CD8-positive, alpha-beta T cell (primary cell): ENCODE measurements at regions of chr16 and their contacts with region 1.

Region 1: DNA sequence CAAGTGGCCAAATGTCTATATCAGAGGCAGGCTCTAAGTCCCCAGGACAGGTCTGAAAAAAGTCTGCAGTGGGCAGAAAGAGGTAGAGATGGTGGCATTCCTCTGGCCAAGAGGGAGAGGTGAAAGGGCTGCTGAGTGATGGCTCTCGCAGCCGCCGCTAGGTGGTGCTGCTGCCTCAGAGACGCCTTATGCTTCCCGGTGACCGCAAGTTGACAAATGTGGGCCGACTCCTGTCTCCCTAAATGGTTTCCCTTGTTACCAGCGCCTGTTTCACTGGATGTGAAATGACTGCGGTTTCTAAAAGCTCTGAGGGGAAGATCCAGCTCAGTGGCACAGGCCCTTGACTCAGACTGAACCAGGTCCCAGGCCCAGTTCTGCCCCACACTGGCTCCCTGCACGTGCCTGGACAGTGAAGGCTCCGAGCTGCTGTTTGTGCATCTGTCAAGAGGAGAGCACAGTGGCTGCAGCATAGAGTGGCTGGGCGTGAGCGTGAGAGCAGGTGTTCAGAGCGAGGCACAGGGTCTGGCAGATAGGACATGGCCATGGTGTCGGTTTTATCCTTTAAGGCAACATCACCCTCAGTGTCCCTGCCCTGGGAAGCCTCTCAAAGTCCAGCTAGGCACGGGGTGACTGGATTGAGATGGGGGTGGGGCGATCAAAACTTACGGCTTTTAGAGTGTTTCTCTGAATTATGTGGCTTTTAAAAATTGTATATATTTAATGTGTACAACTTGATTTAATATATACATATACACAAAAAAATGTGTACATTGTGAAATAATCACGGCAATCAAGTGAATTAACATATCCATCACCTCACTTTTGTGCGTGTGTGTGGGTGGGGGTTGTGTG is 19.9 kb downstream of the CLEC16A start:
- DNase-seq: peak; percentile 57 to 89 (median 82)
- ATAC-seq: peak; percentile 58
- H3K4me3 ChIP-seq: peak overlapping the region in 1 of 2 experiments; percentile 7
- H3K4me3 Mint-ChIP-seq: peak overlapping the region; percentile 18
- H3K27ac ChIP-seq: no peak overlapping the region
- H3K27ac Mint-ChIP-seq: peak overlapping the region; percentile 49
- H3K4me1 ChIP-seq: peaks cover 4% of the 10 kb centered on the region
- H3K4me1 Mint-ChIP-seq: peaks cover 16% of the 10 kb centered on the region
- H3K27me3 ChIP-seq: no peaks in the 10 kb centered on the region
- H3K27me3 Mint-ChIP-seq: no peaks in the 10 kb centered on the region
- CTCF ChIP-seq: peak; percentile 90

Region 2: DNA sequence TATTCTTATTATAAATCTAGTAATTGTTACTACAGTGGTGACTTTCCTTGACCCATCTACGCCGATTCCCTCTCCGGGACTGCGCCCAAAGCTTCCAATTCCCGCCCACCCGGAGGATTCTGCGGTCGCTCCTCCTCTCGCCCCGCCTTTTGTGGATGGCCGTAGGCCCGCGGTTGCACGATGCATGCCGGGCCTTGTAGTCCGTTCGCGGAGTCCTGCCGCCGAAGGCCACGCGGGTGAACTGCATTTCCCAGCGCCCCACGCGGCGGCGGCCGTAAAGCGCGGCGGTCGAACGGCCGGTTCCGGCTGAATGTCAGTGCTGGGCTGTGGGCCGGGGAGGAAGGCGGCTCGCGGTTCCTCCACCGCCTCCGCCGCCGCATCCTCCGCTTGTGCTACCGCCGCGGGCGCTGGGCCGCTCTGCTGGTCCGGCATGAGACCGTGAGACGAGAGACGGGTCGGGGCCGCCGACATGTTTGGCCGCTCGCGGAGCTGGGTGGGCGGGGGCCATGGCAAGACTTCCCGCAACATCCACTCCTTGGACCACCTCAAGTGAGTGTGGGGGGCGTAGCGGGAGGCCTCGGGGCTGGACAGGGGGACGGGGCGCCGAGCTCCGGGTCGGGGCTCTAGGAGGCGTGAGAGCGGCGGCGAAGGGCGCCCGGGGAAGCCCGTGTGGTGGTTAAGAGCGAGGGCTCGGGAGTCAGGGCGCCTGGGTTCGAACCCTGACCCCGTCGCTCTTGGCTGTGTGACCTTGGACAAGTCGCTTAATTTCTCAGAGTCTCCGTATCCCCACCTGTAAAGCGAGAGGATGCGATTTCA is 19.8 kb before region 1 on chr16 and contains the start of gene CLEC16A:
- CTCF ChIA-PET with region 1: interaction called, 47 read pairs
- POLR2A ChIA-PET with region 1: interaction called, 3 read pairs
- intact Hi-C with region 1: no loop called
- DNase-seq: peak; percentile 91 to 98 (median 93)
- ATAC-seq: peak; percentile 70
- H3K4me3 ChIP-seq: peak within 1 kb of the TSS; percentile 66 to 76
- H3K4me3 Mint-ChIP-seq: peak within 1 kb of the TSS; percentile 93
- H3K27ac ChIP-seq: peak within 1 kb of the TSS; percentile 38 to 65
- H3K27ac Mint-ChIP-seq: peak within 1 kb of the TSS; percentile 82
- H3K4me1 ChIP-seq: peaks cover 60% of the 10 kb centered on the region
- H3K4me1 Mint-ChIP-seq: peaks cover 71% of the 10 kb centered on the region
- H3K27me3 ChIP-seq: no peaks in the 10 kb centered on the region
- H3K27me3 Mint-ChIP-seq: no peaks in the 10 kb centered on the region
- CTCF ChIP-seq: no peak
- total RNA-seq, gene CLEC16A: 20.5 to 21.9 TPM

Region 3: GRCh38 chr16:11273721-11274324 is 309.6 kb after region 1 on chr16:
- CTCF ChIA-PET with region 1: interaction called, 11 read pairs
- POLR2A ChIA-PET with region 1: no interaction called
- intact Hi-C with region 1: no loop called
- DNase-seq: no peak
- ATAC-seq: no peak
- H3K4me3 ChIP-seq: no peak overlapping the region
- H3K4me3 Mint-ChIP-seq: no peak overlapping the region
- H3K27ac ChIP-seq: no peak overlapping the region
- H3K27ac Mint-ChIP-seq: no peak overlapping the region
- H3K4me1 ChIP-seq: no peaks in the 10 kb centered on the region
- H3K4me1 Mint-ChIP-seq: no peaks in the 10 kb centered on the region
- H3K27me3 ChIP-seq: no peaks in the 10 kb centered on the region
- H3K27me3 Mint-ChIP-seq: no peaks in the 10 kb centered on the region
- CTCF ChIP-seq: no peak

Region 4: DNA sequence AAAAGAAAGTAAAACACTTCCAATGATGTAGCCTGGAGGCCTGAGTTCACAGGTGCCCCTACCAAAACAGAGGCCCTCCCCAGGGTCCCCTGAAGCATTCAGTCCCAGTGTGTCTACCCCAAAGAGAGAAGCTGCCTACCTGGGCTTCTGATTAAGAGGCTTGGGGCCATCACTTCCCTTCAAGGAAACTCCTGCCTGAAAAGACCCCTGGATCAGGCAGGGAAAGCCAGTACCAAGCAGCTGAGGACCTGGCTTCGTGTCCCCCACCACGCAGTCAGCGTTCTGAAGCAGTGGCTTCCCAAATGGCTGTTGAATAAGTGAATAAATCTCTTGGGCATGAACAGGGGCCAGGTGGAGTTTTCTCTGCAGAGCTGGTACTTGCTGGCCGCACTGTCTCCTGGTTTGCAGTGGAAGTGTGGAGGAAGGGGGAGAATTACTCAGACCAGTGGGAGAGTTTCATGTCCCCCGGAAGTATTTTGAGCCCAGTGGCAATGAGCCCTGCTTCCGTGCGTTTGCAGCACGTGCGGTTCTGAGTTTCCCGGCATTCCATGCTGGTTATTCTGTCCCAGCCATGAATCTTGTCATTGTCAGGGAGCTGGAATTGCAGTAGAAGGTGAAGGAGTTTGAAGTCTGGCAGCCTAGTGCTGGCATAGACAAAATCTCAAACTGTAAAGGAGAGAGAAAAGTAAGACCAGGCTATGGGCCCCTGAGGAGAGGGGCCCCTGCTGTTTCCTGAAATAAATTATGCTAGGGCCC is 408.0 kb after region 1 on chr16:
- CTCF ChIA-PET with region 1: interaction called, 15 read pairs
- POLR2A ChIA-PET with region 1: no interaction called
- intact Hi-C with region 1: no loop called
- DNase-seq: no peak
- ATAC-seq: no peak
- H3K4me3 ChIP-seq: no peak overlapping the region
- H3K4me3 Mint-ChIP-seq: no peak overlapping the region
- H3K27ac ChIP-seq: no peak overlapping the region
- H3K27ac Mint-ChIP-seq: no peak overlapping the region
- H3K4me1 ChIP-seq: no peaks in the 10 kb centered on the region
- H3K4me1 Mint-ChIP-seq: peaks cover 4% of the 10 kb centered on the region
- H3K27me3 ChIP-seq: no peaks in the 10 kb centered on the region
- H3K27me3 Mint-ChIP-seq: no peaks in the 10 kb centered on the region
- CTCF ChIP-seq: no peak

Region 5: GRCh38 chr16:11396241-11397048 is 432.2 kb after region 1 on chr16:
- CTCF ChIA-PET with region 1: interaction called, 10 read pairs
- POLR2A ChIA-PET with region 1: no interaction called
- intact Hi-C with region 1: no loop called
- DNase-seq: peak; percentile 46 to 78 (median 65)
- ATAC-seq: peak; percentile 85
- H3K4me3 ChIP-seq: no peak overlapping the region
- H3K4me3 Mint-ChIP-seq: no peak overlapping the region
- H3K27ac ChIP-seq: no peak overlapping the region
- H3K27ac Mint-ChIP-seq: no peak overlapping the region
- H3K4me1 ChIP-seq: no peaks in the 10 kb centered on the region
- H3K4me1 Mint-ChIP-seq: no peaks in the 10 kb centered on the region
- H3K27me3 ChIP-seq: no peaks in the 10 kb centered on the region
- H3K27me3 Mint-ChIP-seq: no peaks in the 10 kb centered on the region
- CTCF ChIP-seq: peak; percentile 99

Region 6: GRCh38 chr16:11715246-11715947 is 751.1 kb after region 1 on chr16:
- CTCF ChIA-PET with region 1: interaction called, 19 read pairs
- POLR2A ChIA-PET with region 1: no interaction called
- intact Hi-C with region 1: loop called (anchors 2 kb)
- DNase-seq: no peak
- ATAC-seq: no peak
- H3K4me3 ChIP-seq: no peak overlapping the region
- H3K4me3 Mint-ChIP-seq: no peak overlapping the region
- H3K27ac ChIP-seq: no peak overlapping the region
- H3K27ac Mint-ChIP-seq: no peak overlapping the region
- H3K4me1 ChIP-seq: no peaks in the 10 kb centered on the region
- H3K4me1 Mint-ChIP-seq: peaks cover 25% of the 10 kb centered on the region
- H3K27me3 ChIP-seq: no peaks in the 10 kb centered on the region
- H3K27me3 Mint-ChIP-seq: no peaks in the 10 kb centered on the region
- CTCF ChIP-seq: no peak